ENCODE measurements at regions of chr7 and their contacts with region 1.

Region 1: DNA sequence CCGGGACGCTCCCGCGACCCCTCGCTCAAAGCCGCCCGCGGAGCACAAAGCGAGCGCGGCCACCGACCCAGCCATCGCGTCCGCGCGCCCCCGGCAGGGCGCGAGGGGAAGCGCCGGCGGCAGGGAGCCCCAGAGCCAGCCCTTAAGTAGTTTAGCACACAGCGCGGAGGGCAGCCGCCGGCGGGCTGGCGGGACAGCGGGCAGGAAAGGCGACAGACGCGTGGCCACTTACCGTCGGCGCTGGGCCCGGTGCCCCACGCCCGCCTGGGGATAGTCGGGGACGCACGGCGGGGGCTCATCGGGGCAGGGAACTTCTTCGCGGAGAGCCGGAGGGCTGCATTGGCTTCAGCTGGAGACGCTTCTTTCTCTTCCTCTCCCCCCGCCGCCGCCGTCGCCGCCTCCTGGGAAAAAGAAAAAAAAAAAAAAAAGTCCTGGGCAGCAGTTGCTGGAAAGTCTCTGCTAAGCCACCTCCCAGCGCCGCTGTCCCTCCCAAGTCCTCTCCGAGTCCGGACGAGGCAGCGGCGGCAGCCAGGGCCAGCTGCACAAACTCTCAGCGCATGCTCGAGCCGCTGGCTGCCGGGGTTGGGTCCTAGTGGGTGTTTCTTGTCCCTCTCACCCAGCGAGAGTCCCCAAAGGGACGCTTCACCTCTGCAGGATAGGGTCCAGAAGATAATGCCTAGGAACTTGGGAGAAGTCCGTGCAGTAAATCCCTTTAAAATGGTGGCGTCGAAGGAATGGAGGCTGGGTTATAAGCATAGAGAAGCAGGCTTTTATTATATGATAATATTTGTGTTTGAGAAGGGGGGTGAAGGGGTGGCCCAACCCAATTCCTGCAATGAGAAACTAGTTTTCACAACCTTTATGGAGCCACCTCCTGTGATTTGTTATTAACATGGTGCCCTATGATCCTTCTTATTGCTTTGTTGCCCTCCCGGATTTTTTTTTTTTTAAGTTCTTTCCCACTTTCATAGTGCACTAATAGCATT is at the start of gene TSPAN12:
- DNase-seq: no peak
- H3K4me3 ChIP-seq: peak within 1 kb of the TSS; percentile 68 to 81 (median 74)
- H3K27ac ChIP-seq: peak within 1 kb of the TSS; percentile 82 to 93 (median 84)
- H3K4me1 ChIP-seq: peaks cover 5 to 19% (median 11%) of the 10 kb centered on the region in 4 donors
- H3K27me3 ChIP-seq: no peaks in the 10 kb centered on the region
- CTCF ChIP-seq: peak; percentile 55 to 91 (median 57)
- EP300 ChIP-seq: no peak
- POLR2A ChIP-seq: no peak
- total RNA-seq, gene TSPAN12: 6.5 to 17.7 (median 10.1) TPM

Region 2: GRCh38 chr7:120938991-120939744 is 81.3 kb after region 1 on chr7:
- intact Hi-C with region 1: no loop called
- DNase-seq: no peak
- H3K4me3 ChIP-seq: no peak overlapping the region
- H3K27ac ChIP-seq: no peak overlapping the region
- H3K4me1 ChIP-seq: no peaks in the 10 kb centered on the region
- H3K27me3 ChIP-seq: no peaks in the 10 kb centered on the region
- CTCF ChIP-seq: no peak
- EP300 ChIP-seq: no peak
- POLR2A ChIP-seq: no peak

Region 3: GRCh38 chr7:120950539-120951308 is 92.8 kb after region 1 on chr7 and contains the start of gene ING3:
- intact Hi-C with region 1: loop called (anchors 5 kb)
- DNase-seq: peak; percentile 99
- H3K4me3 ChIP-seq: peak within 1 kb of the TSS; percentile 62 to 75 (median 67)
- H3K27ac ChIP-seq: peak within 1 kb of the TSS; percentile 95 to 98 (median 95)
- H3K4me1 ChIP-seq: peaks cover 11 to 28% (median 25%) of the 10 kb centered on the region in 4 donors
- H3K27me3 ChIP-seq: no peaks in the 10 kb centered on the region
- CTCF ChIP-seq: no peak
- EP300 ChIP-seq: no peak
- POLR2A ChIP-seq: no peak
- total RNA-seq, gene ING3: 12.6 to 19.4 (median 14.9) TPM

Measured in esophagus muscularis mucosa (tissue), 4 donors.